Left ventricle myocardium superior (tissue), 1 donor: ENCODE measurements at regions of chr12 and their contacts with region 1.

Region 1: DNA sequence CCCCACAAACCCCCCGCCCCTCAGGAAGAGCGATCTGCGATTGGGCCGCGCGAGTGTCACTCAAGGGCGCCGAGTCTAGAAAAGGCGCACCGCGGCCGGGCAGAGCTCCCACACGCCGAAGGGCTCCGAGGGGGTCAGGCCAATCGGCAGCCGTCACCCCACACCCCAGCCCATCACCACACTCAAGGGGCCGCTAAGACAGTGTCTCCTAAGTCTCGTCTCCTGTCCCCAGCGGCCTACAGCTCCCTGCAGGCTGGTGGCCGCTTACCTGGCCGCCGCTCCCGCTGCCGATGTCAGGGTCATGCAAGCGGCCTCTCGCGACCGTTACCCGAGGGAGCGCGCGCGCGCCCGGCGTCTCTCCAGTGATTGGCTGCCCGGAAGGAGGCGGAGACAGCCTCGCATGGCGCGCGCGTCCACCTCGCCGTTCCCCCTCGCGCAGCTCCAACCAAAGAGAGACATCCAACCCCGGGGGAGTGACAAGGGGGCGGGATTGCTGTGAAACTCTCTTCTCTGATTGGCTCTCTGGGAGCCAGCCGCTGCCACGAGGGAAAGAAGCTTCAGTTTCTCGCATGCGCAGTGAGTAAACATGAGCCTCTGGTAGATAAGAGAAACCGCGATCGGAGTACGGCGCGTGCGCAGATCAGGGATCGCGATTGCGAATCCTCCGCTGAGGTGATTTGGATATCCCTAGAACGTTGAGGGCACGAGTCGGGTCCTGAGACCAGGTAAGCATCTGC is at the starts of genes MPHOSPH9 and MTRFR:
- DNase-seq: peak; percentile 99
- ATAC-seq: peak; percentile 99
- total RNA-seq, gene MPHOSPH9: 27.7 TPM
- total RNA-seq, gene MTRFR: 9.6 TPM

Region 2: DNA sequence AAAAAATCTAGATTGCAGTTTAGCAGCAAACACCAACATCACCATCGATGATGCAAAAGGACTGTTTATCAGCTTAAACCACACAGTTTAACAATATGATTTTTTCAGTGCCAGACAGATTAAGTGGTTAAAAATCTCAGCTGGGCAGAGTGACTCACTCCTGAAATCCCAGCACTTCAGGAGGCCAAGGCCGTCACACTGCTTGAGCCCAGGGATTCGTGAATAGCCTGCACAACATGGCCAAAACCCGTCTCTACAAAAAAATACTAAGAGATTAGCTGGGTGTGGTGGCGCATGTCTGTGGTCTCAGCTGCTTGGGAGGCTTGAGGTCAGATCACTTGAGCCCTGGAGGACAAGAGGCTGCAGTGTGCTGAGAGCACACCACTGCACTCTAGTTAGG is 715.1 kb before region 1 on chr12:
- intact Hi-C with region 1: no loop called
- DNase-seq: no peak
- ATAC-seq: peak; percentile 15

Region 3: GRCh38 chr12:122974274-122974891 is 258.6 kb before region 1 on chr12:
- intact Hi-C with region 1: loop called (anchors 10 kb)
- DNase-seq: peak; percentile 98
- ATAC-seq: peak; percentile 96

Region 4: GRCh38 chr12:123163227-123163626 is 69.7 kb before region 1 on chr12:
- intact Hi-C with region 1: no loop called
- DNase-seq: no peak
- ATAC-seq: no peak

Region 5: GRCh38 chr12:123329799-123330198 is 96.8 kb after region 1 on chr12:
- intact Hi-C with region 1: no loop called
- DNase-seq: no peak
- ATAC-seq: no peak